Activated T-helper 1 cell treated with anti-CD3 and anti-CD28 coated beads, Interleukin-12 subunit alpha, Interleukin-12 subunit beta, Interleukin-2, Interleukin-4 antibody, amounts not matched to agents 30 ng/mL and 10 ng/mL and 1 ng/mL, durations not matched to agents 14 hours and 24 hours and 36 hours (primary cell): ENCODE measurements at regions of chr3 and their contacts with region 1.

Region 1: GRCh38 chr3:186570096-186570940 is at the start of gene DNAJB11:
- DNase-seq: peak; percentile 98
- H3K4me3 Mint-ChIP-seq: peak within 1 kb of the TSS; percentile 91
- H3K27ac Mint-ChIP-seq: peak within 1 kb of the TSS; percentile 99
- H3K4me1 Mint-ChIP-seq: peaks cover 59% of the 10 kb centered on the region
- H3K27me3 Mint-ChIP-seq: no peaks in the 10 kb centered on the region
- total RNA-seq, gene DNAJB11: 71.0 and 75.8 TPM in 2 replicates

Region 2: DNA sequence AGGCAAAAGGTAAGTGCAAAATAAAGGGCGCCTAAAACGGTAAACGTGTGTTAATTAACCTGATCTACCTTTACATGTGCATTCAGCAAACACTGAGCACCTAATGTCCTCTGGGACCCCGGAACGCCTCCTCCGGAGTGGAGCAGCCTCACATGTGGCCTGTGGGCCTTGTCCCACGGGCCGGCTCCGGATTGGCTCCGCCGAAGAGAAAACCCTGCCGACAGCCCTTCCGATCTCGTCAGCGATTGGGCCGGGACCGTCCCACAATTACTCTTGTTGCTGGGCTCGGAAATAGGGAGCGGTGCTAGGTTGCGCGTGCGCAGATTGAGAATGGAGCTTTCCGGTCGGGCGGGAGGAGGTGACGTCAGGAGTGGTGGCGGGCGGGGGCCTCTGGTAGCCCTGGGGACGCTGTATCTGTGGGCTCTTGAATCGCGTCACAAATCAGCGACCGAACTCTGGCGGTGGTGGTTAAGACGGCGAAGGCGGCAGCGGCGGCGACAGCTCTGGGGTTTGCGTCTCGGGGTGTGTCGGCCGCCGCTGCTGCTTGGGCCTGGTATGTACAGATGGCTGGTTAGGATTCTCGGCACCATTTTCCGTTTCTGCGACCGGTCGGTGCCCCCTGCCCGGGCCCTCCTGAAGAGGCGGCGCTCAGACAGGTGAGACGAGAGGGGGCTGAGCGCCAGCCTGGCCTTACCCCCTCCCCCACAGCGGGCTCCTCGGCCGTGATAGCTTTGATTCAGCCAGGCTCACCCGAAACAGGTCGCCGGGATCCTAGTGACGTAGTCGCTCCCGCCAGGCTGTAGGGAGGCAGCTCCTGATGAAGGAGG is 984.2 kb before region 1 on chr3 and contains the start of gene SENP2:
- intact Hi-C with region 1: loop called (anchors 1 kb)
- DNase-seq: peak; percentile 99
- H3K4me3 Mint-ChIP-seq: peak within 1 kb of the TSS; percentile 86
- H3K27ac Mint-ChIP-seq: peak within 1 kb of the TSS; percentile 86
- H3K4me1 Mint-ChIP-seq: peaks cover 20% of the 10 kb centered on the region
- H3K27me3 Mint-ChIP-seq: no peaks in the 10 kb centered on the region
- total RNA-seq, gene SENP2: 33.5 and 34.6 TPM in 2 replicates

Region 3: GRCh38 chr3:185976977-185977678 is 593.2 kb before region 1 on chr3:
- intact Hi-C with region 1: loop called (anchors 1 kb)
- DNase-seq: peak; percentile 71
- H3K4me3 Mint-ChIP-seq: peak overlapping the region; percentile 11
- H3K27ac Mint-ChIP-seq: peak overlapping the region; percentile 82
- H3K4me1 Mint-ChIP-seq: peaks cover 18% of the 10 kb centered on the region
- H3K27me3 Mint-ChIP-seq: peaks cover 37% of the 10 kb centered on the region

Region 4: GRCh38 chr3:186483611-186484340 is 86.5 kb before region 1 on chr3:
- intact Hi-C with region 1: no loop called
- DNase-seq: no peak
- H3K4me3 Mint-ChIP-seq: no peak overlapping the region
- H3K27ac Mint-ChIP-seq: no peak overlapping the region
- H3K4me1 Mint-ChIP-seq: peaks cover 12% of the 10 kb centered on the region
- H3K27me3 Mint-ChIP-seq: peaks cover 4% of the 10 kb centered on the region

Region 5: DNA sequence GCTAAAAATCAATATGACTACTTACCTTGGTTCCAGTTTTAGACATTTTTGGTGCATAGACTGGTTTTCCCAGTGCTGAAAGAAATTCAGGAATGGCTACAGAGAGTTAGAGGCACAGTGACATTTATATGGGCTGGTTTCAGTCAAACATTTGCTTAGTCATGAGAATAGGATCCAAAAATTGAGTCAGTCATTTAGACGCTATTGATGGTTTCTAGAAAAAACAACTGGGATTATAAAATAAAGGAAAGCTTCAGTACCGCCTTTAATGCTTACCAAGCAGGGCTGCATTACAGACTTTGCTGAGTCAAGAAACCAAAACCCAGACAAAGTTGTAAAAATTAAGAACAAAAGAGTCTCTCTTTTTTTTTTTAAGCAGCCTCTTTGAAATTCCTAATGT is 26.0 kb before region 1 on chr3 and contains the start of gene CRYGS:
- intact Hi-C with region 1: no loop called
- DNase-seq: no peak
- H3K4me3 Mint-ChIP-seq: no peak within 1 kb of the TSS
- H3K27ac Mint-ChIP-seq: no peak within 1 kb of the TSS
- H3K4me1 Mint-ChIP-seq: peaks cover 20% of the 10 kb centered on the region
- H3K27me3 Mint-ChIP-seq: no peaks in the 10 kb centered on the region
- total RNA-seq, gene CRYGS: 3.2 TPM in 2 replicates

Region 6: GRCh38 chr3:186589121-186589520 is 18.8 kb after region 1 on chr3:
- intact Hi-C with region 1: loop called (anchors 2 kb)
- DNase-seq: no peak
- H3K4me3 Mint-ChIP-seq: no peak overlapping the region
- H3K27ac Mint-ChIP-seq: no peak overlapping the region
- H3K4me1 Mint-ChIP-seq: peaks cover 19% of the 10 kb centered on the region
- H3K27me3 Mint-ChIP-seq: no peaks in the 10 kb centered on the region

Region 7: GRCh38 chr3:186783073-186783730 is 212.9 kb after region 1 on chr3 and contains the start of gene EIF4A2:
- intact Hi-C with region 1: loop called (anchors 1 kb)
- DNase-seq: peak; percentile 89
- H3K4me3 Mint-ChIP-seq: peak within 1 kb of the TSS; percentile 95
- H3K27ac Mint-ChIP-seq: peak within 1 kb of the TSS; percentile 94
- H3K4me1 Mint-ChIP-seq: peaks cover 41% of the 10 kb centered on the region
- H3K27me3 Mint-ChIP-seq: no peaks in the 10 kb centered on the region
- total RNA-seq, gene EIF4A2: 491 and 514 TPM in 2 replicates

Region 8: GRCh38 chr3:186826976-186827731 is 256.8 kb after region 1 on chr3:
- intact Hi-C with region 1: loop called (anchors 1 kb)
- DNase-seq: peak; percentile 87
- H3K4me3 Mint-ChIP-seq: peak overlapping the region; percentile 93
- H3K27ac Mint-ChIP-seq: peak overlapping the region; percentile 78
- H3K4me1 Mint-ChIP-seq: peaks cover 20% of the 10 kb centered on the region
- H3K27me3 Mint-ChIP-seq: peaks cover 48% of the 10 kb centered on the region